PC-9 (cell line): ENCODE measurements at regions of chr6 and their contacts with region 1.

Region 1: GRCh38 chr6:90216072-90216977 is 80.3 kb downstream of the BACH2 start:
- DNase-seq: no peak
- H3K4me3 ChIP-seq: no peak overlapping the region
- H3K27ac ChIP-seq: no peak overlapping the region
- H3K4me1 ChIP-seq: peaks cover 36% of the 10 kb centered on the region
- H3K27me3 ChIP-seq: no peaks in the 10 kb centered on the region
- CTCF ChIP-seq: no peak

Region 2: DNA sequence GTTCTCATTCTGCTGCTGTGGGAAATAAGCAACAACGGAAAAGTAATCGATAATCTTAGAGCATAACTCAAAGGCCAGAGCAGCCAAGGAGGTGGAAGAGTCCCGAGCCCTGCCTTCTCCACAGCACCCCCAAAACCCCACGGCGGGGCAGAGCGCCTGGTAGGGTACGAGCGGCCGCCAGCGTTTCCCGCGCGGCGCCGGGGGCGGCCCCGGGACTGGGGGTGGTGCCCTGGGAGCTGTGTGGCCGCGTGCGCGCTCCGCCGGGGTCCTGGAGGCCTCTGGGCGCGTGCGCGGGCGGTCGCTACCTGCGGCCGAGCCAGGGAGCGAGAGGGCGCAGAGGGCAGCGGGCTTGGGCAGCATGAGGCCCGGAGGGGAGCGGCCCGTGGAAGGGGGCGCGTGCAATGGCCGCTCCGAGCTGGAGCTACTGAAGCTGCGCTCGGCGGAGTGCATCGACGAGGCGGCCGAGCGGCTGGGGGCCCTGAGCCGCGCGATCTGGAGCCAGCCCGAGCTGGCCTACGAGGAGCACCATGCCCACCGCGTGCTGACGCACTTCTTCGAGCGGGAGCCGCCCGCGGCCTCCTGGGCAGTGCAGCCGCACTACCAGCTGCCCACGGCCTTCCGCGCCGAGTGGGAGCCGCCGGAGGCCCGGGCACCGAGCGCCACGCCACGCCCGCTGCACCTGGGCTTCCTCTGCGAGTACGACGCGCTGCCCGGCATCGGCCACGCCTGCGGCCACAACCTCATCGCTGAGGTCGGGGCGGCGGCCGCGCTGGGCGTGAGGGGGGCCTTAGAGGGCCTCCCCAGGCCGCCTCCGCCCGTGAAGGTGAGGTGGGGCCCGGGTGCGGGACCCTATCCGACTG is 1070.3 kb before region 1 on chr6 and contains the start of gene PM20D2:
- CTCF ChIA-PET with region 1: no interaction called
- POLR2A ChIA-PET with region 1: no interaction called
- intact Hi-C with region 1: no loop called
- DNase-seq: peak in 1 of 2 experiments; percentile 76
- H3K4me3 ChIP-seq: peak within 1 kb of the TSS; percentile 80
- H3K27ac ChIP-seq: peak within 1 kb of the TSS; percentile 85
- H3K4me1 ChIP-seq: peaks cover 32% of the 10 kb centered on the region; the same call in 1 of the 2 replicates
- H3K27me3 ChIP-seq: no peaks in the 10 kb centered on the region
- CTCF ChIP-seq: no peak
- total RNA-seq, gene PM20D2: 21.9 and 28.8 TPM in 2 replicates

Region 3: DNA sequence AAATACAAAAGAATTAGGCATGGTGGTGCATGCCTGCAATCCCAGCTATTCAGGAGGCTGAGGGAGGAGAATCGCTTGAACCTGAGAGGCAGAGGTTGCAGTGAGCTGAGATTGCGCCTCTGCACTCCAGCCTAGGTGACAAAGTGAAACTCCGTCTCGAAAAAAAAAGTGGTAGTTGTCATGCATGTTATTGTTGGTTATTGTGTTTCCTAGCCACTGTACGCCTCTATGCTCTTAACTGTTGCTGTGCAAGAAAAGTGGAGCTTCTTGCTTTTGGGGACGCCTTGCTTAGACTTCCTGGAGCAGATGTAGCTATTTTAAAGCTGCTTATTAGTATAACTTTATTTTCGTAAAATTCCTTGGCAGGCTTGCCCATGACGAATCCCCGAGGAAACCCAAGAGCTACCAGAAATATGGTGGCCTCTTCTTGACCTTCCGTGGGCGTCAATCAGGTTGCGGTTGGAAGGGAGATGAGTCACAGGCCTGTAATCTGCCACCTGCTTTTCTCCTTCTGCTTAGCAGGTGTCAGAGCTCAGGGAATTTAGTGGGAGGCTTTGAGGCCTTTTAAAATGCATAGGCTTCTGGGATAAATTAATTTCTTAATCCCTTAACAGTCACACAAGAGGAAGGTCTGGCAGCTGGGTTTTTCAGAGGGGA is 918.5 kb before region 1 on chr6:
- CTCF ChIA-PET with region 1: no interaction called
- POLR2A ChIA-PET with region 1: no interaction called
- intact Hi-C with region 1: loop called (anchors 2 kb)
- DNase-seq: peak; percentile 87 to 96
- H3K4me3 ChIP-seq: peak overlapping the region; percentile 37; the same call in 1 of the 2 replicates
- H3K27ac ChIP-seq: peak overlapping the region; percentile 100
- H3K4me1 ChIP-seq: peaks cover 36% of the 10 kb centered on the region
- H3K27me3 ChIP-seq: no peaks in the 10 kb centered on the region
- CTCF ChIP-seq: no peak

Region 4: GRCh38 chr6:90184334-90185298 is 31.7 kb before region 1 on chr6:
- CTCF ChIA-PET with region 1: interaction called, 4 read pairs
- POLR2A ChIA-PET with region 1: no interaction called
- intact Hi-C with region 1: loop called (anchors 1 kb)
- DNase-seq: peak; percentile 46 to 75
- H3K4me3 ChIP-seq: no peak overlapping the region
- H3K27ac ChIP-seq: no peak overlapping the region
- H3K4me1 ChIP-seq: no peaks in the 10 kb centered on the region
- H3K27me3 ChIP-seq: no peaks in the 10 kb centered on the region
- CTCF ChIP-seq: no peak

Region 5: DNA sequence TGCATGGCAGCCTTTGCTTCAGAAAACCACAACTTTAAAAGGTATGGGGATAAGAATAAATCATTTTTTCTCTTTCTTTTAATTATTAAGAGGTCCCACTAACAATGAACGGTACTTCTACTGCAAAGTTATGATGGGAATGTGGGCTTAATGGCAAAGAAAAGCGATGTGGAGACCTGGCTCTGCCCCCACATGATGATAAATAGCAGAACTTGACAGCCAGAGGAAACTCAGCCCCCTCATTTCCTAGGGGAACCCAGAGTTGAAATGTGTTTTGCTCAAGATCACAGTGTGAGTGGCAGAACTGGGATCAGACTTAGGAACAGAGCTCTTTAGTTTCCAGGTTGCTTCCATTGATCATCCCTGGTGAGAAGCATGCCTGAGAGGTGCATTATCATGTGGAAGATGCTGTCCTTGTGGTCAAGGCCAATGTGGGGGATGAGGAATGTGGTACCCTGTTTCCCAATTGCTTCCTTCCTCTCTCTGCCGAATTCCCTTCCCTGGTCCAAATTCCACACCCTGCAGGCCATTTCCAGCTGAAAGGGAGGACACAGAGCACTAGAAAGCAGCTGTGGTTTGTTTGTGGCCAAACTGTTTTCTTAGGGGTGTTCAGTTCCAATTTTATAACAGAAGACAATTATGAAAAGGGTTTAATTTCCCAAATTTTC is 14.4 kb after region 1 on chr6:
- CTCF ChIA-PET with region 1: no interaction called
- POLR2A ChIA-PET with region 1: no interaction called
- intact Hi-C with region 1: no loop called
- DNase-seq: no peak
- H3K4me3 ChIP-seq: no peak overlapping the region
- H3K27ac ChIP-seq: no peak overlapping the region
- H3K4me1 ChIP-seq: no peaks in the 10 kb centered on the region
- H3K27me3 ChIP-seq: no peaks in the 10 kb centered on the region
- CTCF ChIP-seq: no peak

Region 6: GRCh38 chr6:90369024-90369519 is 152.7 kb after region 1 on chr6:
- CTCF ChIA-PET with region 1: no interaction called
- POLR2A ChIA-PET with region 1: no interaction called
- intact Hi-C with region 1: loop called (anchors 1 kb)
- DNase-seq: peak; percentile 72 to 97
- H3K4me3 ChIP-seq: no peak overlapping the region
- H3K27ac ChIP-seq: peak overlapping the region; percentile 78
- H3K4me1 ChIP-seq: peaks cover 21% of the 10 kb centered on the region
- H3K27me3 ChIP-seq: no peaks in the 10 kb centered on the region
- CTCF ChIP-seq: no peak

Region 7: DNA sequence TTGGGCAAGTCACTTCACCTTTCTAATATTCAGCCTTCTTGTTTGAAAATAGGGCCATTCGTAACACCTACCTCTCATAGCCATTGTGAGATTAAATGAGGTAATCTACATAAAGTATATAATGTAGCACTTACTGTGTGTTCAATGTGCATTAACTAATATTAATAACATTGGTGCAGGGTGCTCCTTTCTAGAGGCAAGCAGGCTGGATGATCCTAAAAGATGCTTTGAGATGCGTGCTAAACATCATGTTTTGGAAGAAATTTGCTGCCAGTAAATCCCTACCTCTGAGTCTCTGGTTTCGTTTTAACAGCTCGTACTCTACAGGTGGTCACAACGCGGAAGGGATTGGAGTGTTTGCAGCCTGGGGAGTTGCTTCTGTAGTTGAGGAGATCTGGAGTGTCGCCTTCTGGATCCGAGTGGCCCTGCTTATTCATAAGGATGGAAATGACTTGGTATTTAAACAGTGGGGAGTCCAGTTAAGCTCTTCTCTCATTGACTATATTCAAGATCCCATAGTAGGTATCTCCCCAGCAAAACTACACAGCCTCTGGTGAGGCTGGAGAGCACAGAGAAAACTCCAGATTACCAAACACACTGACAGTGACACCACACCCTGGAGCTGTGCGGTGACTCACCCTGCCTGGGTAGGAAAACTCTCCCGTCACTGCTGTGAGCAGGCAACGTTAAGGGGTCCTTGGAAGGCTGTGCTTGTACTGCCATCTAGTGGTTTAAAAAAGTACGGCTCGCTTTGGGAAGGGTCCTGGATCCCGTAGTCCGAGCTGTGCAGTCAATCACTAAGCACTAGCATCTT is 262.7 kb after region 1 on chr6:
- CTCF ChIA-PET with region 1: no interaction called
- POLR2A ChIA-PET with region 1: no interaction called
- intact Hi-C with region 1: loop called (anchors 2 kb)
- DNase-seq: peak; percentile 81 to 82
- H3K4me3 ChIP-seq: no peak overlapping the region
- H3K27ac ChIP-seq: no peak overlapping the region
- H3K4me1 ChIP-seq: no peaks in the 10 kb centered on the region
- H3K27me3 ChIP-seq: no peaks in the 10 kb centered on the region
- CTCF ChIP-seq: peak; percentile 81

Region 8: DNA sequence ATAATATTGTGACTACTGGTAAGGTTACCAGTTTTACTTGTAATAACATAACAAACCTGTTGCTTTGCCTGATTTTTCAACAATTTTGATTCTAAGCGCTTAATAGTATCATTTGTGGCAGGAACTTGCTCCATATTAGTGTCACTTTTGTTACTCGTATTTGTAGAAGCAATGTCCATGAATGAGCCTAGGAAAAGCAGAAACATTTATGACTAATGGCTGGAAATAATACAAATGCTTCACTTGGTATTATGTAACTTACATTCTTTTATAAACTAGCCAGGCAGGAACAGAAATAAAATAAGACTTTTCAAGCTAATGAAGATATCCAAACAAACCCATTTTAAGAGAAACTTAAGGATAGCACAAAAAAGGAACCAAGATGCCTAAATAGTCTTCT is 331.7 kb after region 1 on chr6:
- CTCF ChIA-PET with region 1: no interaction called
- POLR2A ChIA-PET with region 1: no interaction called
- intact Hi-C with region 1: no loop called
- DNase-seq: no peak
- H3K4me3 ChIP-seq: no peak overlapping the region
- H3K27ac ChIP-seq: no peak overlapping the region
- H3K4me1 ChIP-seq: no peaks in the 10 kb centered on the region
- H3K27me3 ChIP-seq: no peaks in the 10 kb centered on the region
- CTCF ChIP-seq: no peak

Region 9: DNA sequence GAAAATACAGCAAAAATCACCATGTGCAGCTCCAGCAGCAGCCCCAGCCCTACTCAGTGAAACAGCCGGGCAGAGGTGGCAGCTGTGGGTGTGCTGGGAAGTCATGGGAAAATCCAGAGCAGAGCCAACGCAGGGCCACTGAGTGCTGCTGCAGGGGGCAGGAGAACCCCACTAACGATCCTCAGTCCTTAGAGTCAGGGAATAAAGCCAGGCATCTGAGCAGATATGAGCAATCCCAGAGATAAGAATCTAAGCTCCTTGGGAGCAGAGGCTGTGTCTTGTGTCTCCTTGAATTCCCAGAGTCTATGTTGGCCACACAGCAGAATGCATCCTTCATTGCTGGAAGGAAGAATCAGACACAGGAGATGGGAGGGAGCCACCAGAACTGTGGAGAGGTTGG is 863.6 kb after region 1 on chr6:
- CTCF ChIA-PET with region 1: no interaction called
- POLR2A ChIA-PET with region 1: no interaction called
- intact Hi-C with region 1: no loop called
- DNase-seq: no peak
- H3K4me3 ChIP-seq: no peak overlapping the region
- H3K27ac ChIP-seq: no peak overlapping the region
- H3K4me1 ChIP-seq: no peaks in the 10 kb centered on the region
- H3K27me3 ChIP-seq: no peaks in the 10 kb centered on the region
- CTCF ChIP-seq: no peak